ENCODE measurements at regions of chr5 and their contacts with region 1.

Region 1: GRCh38 chr5:1494780-1495524 is 28.8 kb downstream of the LPCAT1 start:
- DNase-seq: peak; percentile 45
- H3K4me3 Mint-ChIP-seq: no peak overlapping the region
- H3K27ac Mint-ChIP-seq: no peak overlapping the region
- H3K4me1 Mint-ChIP-seq: peaks cover 35% of the 10 kb centered on the region
- H3K27me3 Mint-ChIP-seq: no peaks in the 10 kb centered on the region

Region 2: DNA sequence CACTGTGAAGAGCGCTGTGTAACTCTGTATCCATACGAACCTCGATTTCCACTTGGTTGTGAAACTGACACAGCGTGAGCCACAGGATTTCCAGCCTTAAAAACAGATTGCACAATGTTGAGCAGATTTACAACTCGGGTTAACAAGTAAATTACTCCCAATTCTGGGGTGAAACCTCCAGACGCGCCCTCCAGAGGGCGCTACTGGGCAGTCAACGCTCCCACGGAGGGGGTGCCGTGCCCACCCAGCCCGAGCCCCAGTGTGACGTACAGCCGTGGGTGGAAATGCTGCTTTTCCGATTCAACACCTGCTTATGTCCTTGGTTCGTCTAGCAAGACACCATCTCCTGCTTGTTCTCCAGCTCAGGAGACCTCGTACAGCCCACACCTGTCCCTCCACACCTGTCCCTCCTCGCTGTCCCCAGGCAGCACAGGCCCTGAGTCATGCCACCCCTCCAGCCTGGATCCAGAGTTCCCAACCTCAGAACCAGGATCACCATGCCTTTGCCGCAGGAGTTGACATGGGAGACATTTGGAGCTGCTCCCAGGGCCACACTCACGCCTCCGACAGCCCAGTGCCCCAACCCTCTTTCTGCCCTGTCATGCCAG is 15.3 kb before region 1 on chr5:
- CTCF ChIA-PET with region 1: interaction called, 10 read pairs
- intact Hi-C with region 1: no loop called
- DNase-seq: peak; percentile 48
- H3K4me3 Mint-ChIP-seq: no peak overlapping the region
- H3K27ac Mint-ChIP-seq: no peak overlapping the region
- H3K4me1 Mint-ChIP-seq: peaks cover 4% of the 10 kb centered on the region
- H3K27me3 Mint-ChIP-seq: no peaks in the 10 kb centered on the region

Region 3: GRCh38 chr5:1523771-1524480 is 29.0 kb after region 1 on chr5 and contains the start of gene LPCAT1:
- CTCF ChIA-PET with region 1: interaction called, 3 read pairs
- intact Hi-C with region 1: loop called (anchors 2 kb)
- DNase-seq: peak; percentile 68
- H3K4me3 Mint-ChIP-seq: peak within 1 kb of the TSS; percentile 87
- H3K27ac Mint-ChIP-seq: peak within 1 kb of the TSS; percentile 4
- H3K4me1 Mint-ChIP-seq: peaks cover 22% of the 10 kb centered on the region
- H3K27me3 Mint-ChIP-seq: no peaks in the 10 kb centered on the region
- total RNA-seq, gene LPCAT1: 31.2 to 34.1 TPM

Region 4: DNA sequence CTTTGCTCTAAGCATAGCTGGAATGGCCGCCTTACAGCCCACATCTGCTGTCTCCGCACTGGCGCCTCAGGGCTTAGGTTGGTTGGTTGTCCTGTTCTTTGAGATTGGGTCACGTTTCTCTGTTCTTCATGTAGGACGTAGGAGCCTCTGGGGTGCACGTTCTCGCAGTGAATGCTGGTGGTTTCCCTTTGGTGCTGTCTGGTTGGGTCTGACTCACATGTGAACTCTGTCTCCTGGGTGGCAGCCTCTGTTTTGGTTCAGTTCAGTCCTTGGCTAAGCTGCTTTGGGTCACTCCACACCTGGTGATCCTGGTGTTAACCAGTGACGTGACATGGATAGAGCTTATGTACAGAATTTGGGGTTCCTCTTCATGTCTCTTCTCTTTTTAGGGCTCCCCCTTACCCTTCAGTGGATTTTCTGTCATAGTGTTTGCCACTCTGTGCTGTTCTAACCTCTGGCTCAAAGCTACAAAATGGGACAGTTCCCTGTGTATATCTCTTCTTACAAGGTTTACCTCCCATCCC is 41.4 kb after region 1 on chr5:
- CTCF ChIA-PET with region 1: no interaction called
- intact Hi-C with region 1: loop called (anchors 1 kb)
- DNase-seq: peak; percentile 89
- H3K4me3 Mint-ChIP-seq: peak overlapping the region; percentile 76
- H3K27ac Mint-ChIP-seq: peak overlapping the region; percentile 68
- H3K4me1 Mint-ChIP-seq: peaks cover 16% of the 10 kb centered on the region
- H3K27me3 Mint-ChIP-seq: no peaks in the 10 kb centered on the region

Measured in activated naive CD4-positive, alpha-beta T cell treated with anti-CD3 and anti-CD28 coated beads for 36 hours (primary cell).